Activated naive CD8-positive, alpha-beta T cell treated with anti-CD3 and anti-CD28 coated beads, Interleukin-2, amount 10 ng/mL, durations not matched to agents 7 days and 5 days (primary cell): ENCODE measurements at regions of chr3 and their contacts with region 1.

Region 1: DNA sequence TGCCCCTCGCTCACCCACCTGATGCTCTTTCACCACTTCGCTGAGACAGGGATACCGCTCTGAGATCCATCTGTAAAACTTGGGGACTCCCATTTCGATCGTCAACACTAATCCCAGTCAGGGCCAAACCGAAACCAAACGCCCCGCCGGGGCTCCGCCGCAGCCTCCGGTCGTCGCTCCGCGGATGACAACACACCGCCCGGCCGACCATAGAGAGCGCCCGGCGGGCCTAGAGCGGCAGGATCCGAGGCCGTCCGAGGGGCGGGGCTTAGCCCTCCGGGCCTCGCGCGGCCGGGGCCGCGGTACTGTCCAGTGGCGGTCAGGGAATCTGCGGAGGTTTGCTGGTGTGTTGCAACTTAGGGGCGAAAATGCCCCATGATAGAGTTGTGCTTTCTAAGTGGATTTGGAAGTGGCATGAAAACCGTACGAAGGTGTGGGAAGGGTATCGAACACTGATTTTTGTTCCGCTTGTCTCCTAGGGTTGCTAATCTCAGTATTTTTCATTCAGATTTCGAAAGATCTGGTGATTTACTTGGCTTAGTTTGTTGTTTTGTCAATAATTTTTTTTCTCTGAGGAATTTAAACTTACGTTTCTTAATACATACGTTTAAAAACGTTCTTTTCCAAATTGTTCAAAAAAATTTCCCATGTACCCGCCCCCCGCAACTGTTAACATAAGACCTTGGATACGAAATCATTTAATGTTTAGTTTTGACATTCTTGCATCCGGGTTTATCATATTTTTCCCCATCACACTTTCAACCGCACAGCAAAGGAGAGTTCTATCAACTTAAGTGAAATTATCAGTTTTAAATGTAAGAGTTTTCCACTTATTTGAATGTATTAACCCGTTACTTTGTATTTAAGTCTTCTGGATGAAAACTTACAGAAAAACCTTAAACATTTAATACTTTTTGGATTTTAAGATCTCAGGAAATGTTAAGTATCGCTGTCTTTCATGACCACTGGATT is at the start of gene XRN1:
- DNase-seq: peak; percentile 97
- ATAC-seq: peak; percentile 91
- H3K4me3 Mint-ChIP-seq: peak within 1 kb of the TSS; percentile 88
- H3K27ac Mint-ChIP-seq: peak within 1 kb of the TSS; percentile 97
- H3K4me1 Mint-ChIP-seq: peaks cover 23% of the 10 kb centered on the region
- H3K27me3 Mint-ChIP-seq: no peaks in the 10 kb centered on the region
- total RNA-seq, gene XRN1: 88.8 to 89.8 TPM

Region 2: GRCh38 chr3:143001369-143002082 is 553.4 kb after region 1 on chr3 and contains the start of gene U2SURP:
- POLR2A ChIA-PET with region 1: interaction called, 15 read pairs
- DNase-seq: peak; percentile 86
- ATAC-seq: peak; percentile 88
- H3K4me3 Mint-ChIP-seq: peak within 1 kb of the TSS; percentile 91
- H3K27ac Mint-ChIP-seq: peak within 1 kb of the TSS; percentile 99
- H3K4me1 Mint-ChIP-seq: peaks cover 21% of the 10 kb centered on the region
- H3K27me3 Mint-ChIP-seq: peaks cover 2% of the 10 kb centered on the region
- total RNA-seq, gene U2SURP: 134 to 147 TPM